Cardiac septum (tissue), 1 donor: ENCODE measurements at regions of chr15 and their contacts with region 1.

Region 1: GRCh38 chr15:25863111-25863967 is at the start of gene ATP10A:
- DNase-seq: no peak
- total RNA-seq, gene ATP10A: 0.94 TPM

Region 2: GRCh38 chr15:25790000-25790660 is 73.2 kb before region 1 on chr15:
- intact Hi-C with region 1: loop called (anchors 5 kb)
- DNase-seq: no peak

Region 3: DNA sequence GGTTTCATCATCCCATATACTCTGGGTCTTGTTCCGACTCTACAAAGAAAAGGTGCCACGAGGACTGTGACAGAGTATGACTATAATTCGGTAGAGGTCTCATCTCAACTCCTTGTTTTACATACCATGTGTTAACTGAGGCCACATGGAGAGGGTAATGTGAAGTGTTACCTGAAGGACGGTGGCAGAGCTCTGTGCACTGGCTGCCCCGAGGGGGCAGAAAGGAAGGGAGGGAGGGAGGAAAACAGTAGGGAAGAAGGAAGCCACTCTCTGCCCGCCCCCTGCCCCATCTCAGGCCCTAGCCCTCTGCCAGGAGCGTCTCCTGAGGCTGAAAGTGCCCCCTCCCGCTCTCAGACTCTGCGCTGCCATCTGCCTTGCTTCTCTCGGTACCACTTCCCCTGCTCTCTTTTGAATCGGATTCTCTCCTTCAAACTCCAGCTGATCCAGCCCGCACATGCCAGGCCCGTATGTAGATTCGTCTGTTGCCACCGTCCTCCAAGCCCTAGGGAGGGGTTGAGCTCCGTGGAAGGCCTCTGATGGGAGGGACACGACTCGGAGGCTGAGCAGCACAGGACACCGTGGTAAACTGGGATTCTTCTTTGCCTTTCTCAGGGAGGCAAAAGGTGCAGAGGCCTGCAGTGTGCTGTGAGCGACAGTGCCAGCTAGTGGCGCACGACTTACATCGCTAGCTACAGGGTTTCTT is 70.3 kb after region 1 on chr15:
- intact Hi-C with region 1: no loop called
- DNase-seq: peak; percentile 80

Region 4: GRCh38 chr15:26146199-26146598 is 282.9 kb after region 1 on chr15:
- intact Hi-C with region 1: no loop called
- DNase-seq: no peak